ENCODE measurements at regions of chr14 and their contacts with region 1.

Region 1: DNA sequence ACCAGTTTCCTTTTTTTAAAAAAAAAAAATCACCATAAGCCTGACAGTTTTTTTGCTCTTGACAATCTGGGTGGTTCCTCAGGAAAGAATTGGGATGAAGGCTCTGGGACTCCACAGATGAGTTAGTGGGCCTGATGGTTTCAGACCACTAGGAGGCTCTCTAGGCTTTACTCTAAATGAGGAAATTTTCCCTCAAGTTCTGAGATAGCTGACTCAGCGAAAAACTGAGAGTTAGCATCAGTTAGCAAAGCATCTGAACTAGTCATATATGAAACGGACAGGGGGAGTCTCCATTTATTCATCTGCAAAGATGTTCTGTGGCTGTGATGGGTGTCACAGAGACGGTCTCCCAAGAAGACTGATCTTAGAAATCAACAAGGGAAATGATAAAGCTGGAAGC is 314.3 kb upstream of the OR4E1 start:
- DNase-seq: peak; percentile 38
- ATAC-seq: peak; percentile 74
- H3K4me3 Mint-ChIP-seq: peak overlapping the region; percentile 54
- H3K27ac Mint-ChIP-seq: peak overlapping the region; percentile 89
- H3K4me1 Mint-ChIP-seq: peaks cover 27% of the 10 kb centered on the region
- H3K27me3 Mint-ChIP-seq: peaks cover 1% of the 10 kb centered on the region
- CTCF ChIP-seq: peak; percentile 50

Region 2: GRCh38 chr14:22002860-22003309 is 14.9 kb after region 1 on chr14:
- CTCF ChIA-PET with region 1: interaction called, 51 read pairs
- POLR2A ChIA-PET with region 1: interaction called, 3 read pairs
- intact Hi-C with region 1: no loop called
- DNase-seq: peak; percentile 86
- ATAC-seq: peak; percentile 79
- H3K4me3 Mint-ChIP-seq: peak overlapping the region; percentile 81
- H3K27ac Mint-ChIP-seq: peak overlapping the region; percentile 92
- H3K4me1 Mint-ChIP-seq: peaks cover 17% of the 10 kb centered on the region
- H3K27me3 Mint-ChIP-seq: no peaks in the 10 kb centered on the region
- CTCF ChIP-seq: peak; percentile 58

Region 3: DNA sequence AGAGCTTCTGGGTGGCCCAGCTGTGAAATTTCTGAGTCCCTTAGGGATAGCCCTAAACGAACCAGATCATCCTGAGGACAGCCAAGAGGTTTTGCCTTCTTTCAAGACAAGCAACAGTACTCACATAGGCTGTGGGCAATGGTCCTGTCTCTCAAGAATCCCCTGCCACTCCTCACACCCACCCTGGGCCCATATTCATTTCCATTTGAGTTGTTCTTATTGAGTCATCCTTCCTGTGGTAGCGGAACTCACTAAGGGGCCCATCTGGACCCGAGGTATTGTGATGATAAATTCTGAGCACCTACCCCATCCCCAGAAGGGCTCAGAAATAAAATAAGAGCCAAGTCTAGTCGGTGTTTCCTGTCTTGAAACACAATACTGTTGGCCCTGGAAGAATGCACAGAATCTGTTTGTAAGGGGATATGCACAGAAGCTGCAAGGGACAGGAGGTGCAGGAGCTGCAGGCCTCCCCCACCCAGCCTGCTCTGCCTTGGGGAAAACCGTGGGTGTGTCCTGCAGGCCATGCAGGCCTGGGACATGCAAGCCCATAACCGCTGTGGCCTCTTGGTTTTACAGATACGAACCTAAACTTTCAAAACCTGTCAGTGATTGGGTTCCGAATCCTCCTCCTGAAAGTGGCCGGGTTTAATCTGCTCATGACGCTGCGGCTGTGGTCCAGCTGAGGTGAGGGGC is 562.2 kb after region 1 on chr14:
- CTCF ChIA-PET with region 1: interaction called, 8 read pairs
- POLR2A ChIA-PET with region 1: interaction called, 5 read pairs
- intact Hi-C with region 1: loop called (anchors 5 kb)
- DNase-seq: peak; percentile 90
- ATAC-seq: peak; percentile 57
- H3K4me3 Mint-ChIP-seq: peak overlapping the region; percentile 79
- H3K27ac Mint-ChIP-seq: peak overlapping the region; percentile 94
- H3K4me1 Mint-ChIP-seq: peaks cover 92% of the 10 kb centered on the region
- H3K27me3 Mint-ChIP-seq: no peaks in the 10 kb centered on the region
- CTCF ChIP-seq: no peak